Activated CD4-positive, alpha-beta T cell treated with anti-CD3 and anti-CD28 coated beads, Interleukin-2, amount 10 ng/mL, durations not matched to agents 24 days and 14 days (primary cell): ENCODE measurements at regions of chr7 and their contacts with region 1.

Region 1: GRCh38 chr7:107816011-107816566 is 13.1 kb upstream of the SLC26A3 start:
- DNase-seq: no peak
- H3K4me3 Mint-ChIP-seq: peak overlapping the region; percentile 23
- H3K27ac Mint-ChIP-seq: peak overlapping the region; percentile 84
- H3K4me1 Mint-ChIP-seq: peaks cover 23% of the 10 kb centered on the region
- H3K27me3 Mint-ChIP-seq: peaks cover 3% of the 10 kb centered on the region

Region 2: DNA sequence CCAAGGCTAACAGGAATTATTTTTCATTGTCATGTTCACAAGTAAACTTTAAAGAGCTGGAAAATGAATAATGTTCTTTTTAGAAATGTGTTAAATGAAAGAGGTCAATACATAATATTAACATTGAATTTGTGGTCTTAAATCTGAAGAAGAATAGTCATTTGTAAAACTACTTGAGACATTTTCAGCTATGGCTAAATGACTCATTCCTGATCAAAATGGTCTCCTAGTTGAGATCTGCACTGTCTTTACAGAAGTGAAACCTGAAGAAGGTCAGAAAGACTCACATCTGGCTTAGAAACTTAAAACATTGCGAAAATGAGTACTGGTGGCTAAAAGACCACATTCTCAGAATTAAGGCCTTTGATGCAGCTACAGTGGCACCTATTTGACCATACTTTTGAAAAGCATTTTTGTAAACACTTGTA is 945.1 kb before region 1 on chr7:
- intact Hi-C with region 1: loop called (anchors 1 kb)
- DNase-seq: peak; percentile 63
- H3K4me3 Mint-ChIP-seq: peak overlapping the region; percentile 36
- H3K27ac Mint-ChIP-seq: peak overlapping the region; percentile 68
- H3K4me1 Mint-ChIP-seq: peaks cover 54% of the 10 kb centered on the region
- H3K27me3 Mint-ChIP-seq: no peaks in the 10 kb centered on the region

Region 3: GRCh38 chr7:107785926-107786325 is 30.2 kb before region 1 on chr7:
- intact Hi-C with region 1: loop called (anchors 2 kb)
- DNase-seq: no peak
- H3K4me3 Mint-ChIP-seq: no peak overlapping the region
- H3K27ac Mint-ChIP-seq: no peak overlapping the region
- H3K4me1 Mint-ChIP-seq: peaks cover 11% of the 10 kb centered on the region
- H3K27me3 Mint-ChIP-seq: peaks cover 7% of the 10 kb centered on the region

Region 4: DNA sequence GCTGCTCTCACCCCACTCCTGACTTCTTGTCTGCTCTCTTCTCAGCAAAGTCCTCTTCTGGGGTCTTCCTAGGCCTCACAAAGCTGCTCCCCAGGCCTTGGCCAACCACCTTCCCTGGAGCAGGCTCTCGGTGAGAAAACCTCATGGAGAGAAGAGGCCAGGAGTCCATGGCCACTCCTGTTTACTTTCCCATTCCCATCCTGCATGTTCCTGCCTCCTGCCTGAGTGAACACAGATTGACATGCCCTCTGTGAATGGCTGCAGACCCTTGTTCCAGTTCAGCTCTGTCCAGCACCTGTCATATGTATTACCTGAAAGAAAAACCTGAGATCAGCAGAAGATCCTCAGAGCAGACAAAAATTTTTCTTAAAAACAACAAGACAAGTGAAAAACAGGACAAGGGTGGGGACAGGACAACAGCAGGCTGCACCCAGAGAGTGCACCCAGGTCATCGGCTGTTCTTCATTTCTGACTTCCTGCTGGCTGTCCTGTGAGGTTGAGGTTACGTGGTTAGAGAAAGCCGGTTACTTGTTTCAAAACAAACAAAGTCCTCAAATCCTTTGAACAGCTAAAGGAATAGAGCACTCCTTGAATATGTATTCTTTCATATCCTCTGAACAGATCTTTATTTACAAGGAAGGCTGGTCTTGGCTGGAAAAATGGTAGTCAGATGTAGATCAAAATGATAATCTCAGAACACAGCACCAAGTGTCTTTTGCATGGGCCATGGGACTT is 40.9 kb after region 1 on chr7:
- intact Hi-C with region 1: loop called (anchors 1 kb)
- DNase-seq: peak; percentile 84
- H3K4me3 Mint-ChIP-seq: peak overlapping the region; percentile 69
- H3K27ac Mint-ChIP-seq: peak overlapping the region; percentile 85
- H3K4me1 Mint-ChIP-seq: peaks cover 24% of the 10 kb centered on the region
- H3K27me3 Mint-ChIP-seq: peaks cover 2% of the 10 kb centered on the region

Region 5: DNA sequence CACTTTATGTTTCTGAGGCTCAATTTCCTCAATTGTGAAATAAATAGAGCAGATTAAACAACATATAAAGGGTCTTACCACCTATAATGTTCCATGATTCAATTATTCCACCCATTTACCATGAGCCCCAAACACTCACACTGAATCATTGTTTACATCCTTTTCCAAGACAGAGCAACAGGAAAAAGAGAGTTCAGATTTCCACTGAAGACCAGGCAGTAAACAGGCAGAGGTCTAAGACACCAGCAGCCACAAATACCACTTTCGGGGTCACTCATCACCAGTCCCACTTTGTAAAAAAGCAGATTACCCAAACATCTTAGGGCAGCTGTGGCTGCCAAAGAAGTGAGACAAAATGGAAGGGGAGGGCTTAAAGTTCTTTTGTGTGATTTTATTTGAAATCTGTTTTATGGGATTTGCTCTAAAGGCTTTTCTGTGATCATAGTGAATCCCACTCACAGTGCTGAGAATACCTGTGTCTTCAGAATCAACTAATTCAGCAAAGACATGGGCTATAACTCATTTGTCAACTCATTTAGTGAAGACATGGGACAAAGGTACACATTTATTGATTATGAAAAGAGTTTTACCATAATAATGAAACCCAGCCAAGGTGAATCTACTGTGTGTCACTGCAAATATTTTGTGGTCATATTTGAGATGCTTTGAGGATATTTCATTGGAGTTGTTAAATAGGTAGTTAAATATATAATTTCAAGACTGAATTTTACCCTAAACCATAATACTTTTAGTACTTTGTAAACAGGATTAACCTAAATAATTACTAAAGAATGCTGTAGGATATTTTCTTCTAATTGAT is 50.1 kb after region 1 on chr7:
- intact Hi-C with region 1: loop called (anchors 1 kb)
- DNase-seq: no peak
- H3K4me3 Mint-ChIP-seq: peak overlapping the region; percentile 48
- H3K27ac Mint-ChIP-seq: peak overlapping the region; percentile 87
- H3K4me1 Mint-ChIP-seq: peaks cover 20% of the 10 kb centered on the region
- H3K27me3 Mint-ChIP-seq: no peaks in the 10 kb centered on the region

Region 6: GRCh38 chr7:108135446-108136190 is 319.5 kb after region 1 on chr7:
- intact Hi-C with region 1: loop called (anchors 5 kb)
- DNase-seq: peak; percentile 82
- H3K4me3 Mint-ChIP-seq: peak overlapping the region; percentile 66
- H3K27ac Mint-ChIP-seq: peak overlapping the region; percentile 93
- H3K4me1 Mint-ChIP-seq: peaks cover 25% of the 10 kb centered on the region
- H3K27me3 Mint-ChIP-seq: peaks cover 14% of the 10 kb centered on the region